Psoas muscle (tissue), 8 donors: ENCODE measurements at regions of chr2 and their contacts with region 1.

Region 1: GRCh38 chr2:131154071-131154531 is 49.0 kb downstream of the PLEKHB2 start:
- DNase-seq: peak; percentile 34 to 72
- ATAC-seq: peak; percentile 80 to 92 (median 84)
- H3K4me3 ChIP-seq: no peak overlapping the region
- H3K27ac ChIP-seq: no peak overlapping the region
- H3K4me1 ChIP-seq: no peaks in the 10 kb centered on the region
- H3K27me3 ChIP-seq: no peaks in the 10 kb centered on the region
- CTCF ChIP-seq: peak; percentile 76

Region 2: DNA sequence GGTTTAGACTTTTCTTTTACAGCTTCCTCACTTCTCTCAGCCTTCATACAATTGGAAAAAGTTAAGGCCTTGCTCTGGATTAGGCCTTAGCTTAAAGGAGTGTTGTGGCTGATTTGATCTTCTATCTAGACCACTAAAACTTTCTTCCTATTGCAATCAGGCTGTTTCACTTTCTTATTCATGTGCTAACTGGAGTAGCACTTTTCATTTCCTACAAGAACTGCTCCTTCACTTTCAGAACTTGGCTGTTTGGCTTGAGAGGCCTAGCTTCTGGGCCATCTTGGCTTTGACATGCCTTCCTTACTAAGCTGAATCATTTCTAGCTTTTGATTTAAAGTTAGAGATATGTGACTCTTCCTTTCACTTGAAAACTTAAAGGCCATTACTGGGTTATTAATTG is 203.1 kb before region 1 on chr2:
- intact Hi-C with region 1: no loop called
- DNase-seq: no peak
- ATAC-seq: no peak
- H3K4me3 ChIP-seq: no peak overlapping the region
- H3K27ac ChIP-seq: no peak overlapping the region
- H3K4me1 ChIP-seq: no peaks in the 10 kb centered on the region
- H3K27me3 ChIP-seq: no peaks in the 10 kb centered on the region
- CTCF ChIP-seq: no peak

Region 3: DNA sequence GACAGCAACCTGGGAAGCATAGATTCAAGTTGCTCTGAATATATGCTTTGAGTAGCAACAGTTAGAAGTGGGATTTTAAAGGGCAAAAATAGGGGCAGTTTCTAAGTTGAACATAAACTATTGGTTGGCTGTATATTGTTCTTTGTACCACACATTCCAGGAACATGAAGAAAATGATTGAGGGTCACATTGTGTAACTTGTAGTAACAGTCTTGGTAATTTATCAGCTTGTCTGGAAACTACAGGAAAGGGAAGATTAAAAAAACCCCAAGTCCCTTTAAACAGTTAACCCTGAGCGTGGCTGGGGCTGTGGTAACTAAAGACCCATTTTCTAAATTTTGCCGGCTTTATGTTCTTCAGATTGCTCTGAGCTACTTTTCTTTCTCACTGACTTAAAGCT is 41.6 kb before region 1 on chr2:
- intact Hi-C with region 1: no loop called
- DNase-seq: no peak
- ATAC-seq: no peak
- H3K4me3 ChIP-seq: no peak overlapping the region
- H3K27ac ChIP-seq: no peak overlapping the region
- H3K4me1 ChIP-seq: peaks cover 18% of the 10 kb centered on the region
- H3K27me3 ChIP-seq: no peaks in the 10 kb centered on the region
- CTCF ChIP-seq: no peak

Region 4: GRCh38 chr2:131201098-131201497 is 47.0 kb after region 1 on chr2:
- intact Hi-C with region 1: no loop called
- DNase-seq: no peak
- ATAC-seq: no peak
- H3K4me3 ChIP-seq: no peak overlapping the region
- H3K27ac ChIP-seq: no peak overlapping the region
- H3K4me1 ChIP-seq: no peaks in the 10 kb centered on the region
- H3K27me3 ChIP-seq: no peaks in the 10 kb centered on the region
- CTCF ChIP-seq: no peak

Region 5: GRCh38 chr2:131349021-131349420 is 194.9 kb after region 1 on chr2:
- intact Hi-C with region 1: no loop called
- DNase-seq: no peak
- ATAC-seq: no peak
- H3K4me3 ChIP-seq: no peak overlapping the region
- H3K27ac ChIP-seq: no peak overlapping the region
- H3K4me1 ChIP-seq: no peaks in the 10 kb centered on the region
- H3K27me3 ChIP-seq: peaks cover 0 to 5% (median 2%) of the 10 kb centered on the region in 3 donors
- CTCF ChIP-seq: no peak

Region 6: GRCh38 chr2:131413148-131413747 is 259.1 kb after region 1 on chr2:
- intact Hi-C with region 1: loop called in 1 of 2 experiments (anchors 10 kb)
- DNase-seq: no peak
- ATAC-seq: peak; percentile 56 to 73 (median 62)
- H3K4me3 ChIP-seq: no peak overlapping the region
- H3K27ac ChIP-seq: no peak overlapping the region
- H3K4me1 ChIP-seq: no peaks in the 10 kb centered on the region
- H3K27me3 ChIP-seq: peaks cover 0 to 20% (median 1%) of the 10 kb centered on the region in 3 donors
- CTCF ChIP-seq: peak; percentile 80